CD8-positive, alpha-beta memory T cell (primary cell): ENCODE measurements at regions of chrX and their contacts with region 1.

Region 1: GRCh38 chrX:154748712-154749343 is 2.0 kb downstream of the GAB3 start:
- DNase-seq: peak in 4 of 5 donors; percentile 27 to 66 (median 62)
- H3K4me3 ChIP-seq: peak overlapping the region; percentile 68
- H3K4me3 Mint-ChIP-seq: peak overlapping the region; percentile 82 to 91 (median 86)
- H3K27ac ChIP-seq: peak overlapping the region; percentile 76
- H3K27ac Mint-ChIP-seq: peak overlapping the region; percentile 73 to 95 (median 85)
- H3K4me1 ChIP-seq: peaks cover 15% of the 10 kb centered on the region
- H3K4me1 Mint-ChIP-seq: peaks cover 33 to 58% (median 54%) of the 10 kb centered on the region in 3 donors
- H3K27me3 ChIP-seq: no peaks in the 10 kb centered on the region
- H3K27me3 Mint-ChIP-seq: peaks cover 0 to 5% of the 10 kb centered on the region in 2 donors

Region 2: DNA sequence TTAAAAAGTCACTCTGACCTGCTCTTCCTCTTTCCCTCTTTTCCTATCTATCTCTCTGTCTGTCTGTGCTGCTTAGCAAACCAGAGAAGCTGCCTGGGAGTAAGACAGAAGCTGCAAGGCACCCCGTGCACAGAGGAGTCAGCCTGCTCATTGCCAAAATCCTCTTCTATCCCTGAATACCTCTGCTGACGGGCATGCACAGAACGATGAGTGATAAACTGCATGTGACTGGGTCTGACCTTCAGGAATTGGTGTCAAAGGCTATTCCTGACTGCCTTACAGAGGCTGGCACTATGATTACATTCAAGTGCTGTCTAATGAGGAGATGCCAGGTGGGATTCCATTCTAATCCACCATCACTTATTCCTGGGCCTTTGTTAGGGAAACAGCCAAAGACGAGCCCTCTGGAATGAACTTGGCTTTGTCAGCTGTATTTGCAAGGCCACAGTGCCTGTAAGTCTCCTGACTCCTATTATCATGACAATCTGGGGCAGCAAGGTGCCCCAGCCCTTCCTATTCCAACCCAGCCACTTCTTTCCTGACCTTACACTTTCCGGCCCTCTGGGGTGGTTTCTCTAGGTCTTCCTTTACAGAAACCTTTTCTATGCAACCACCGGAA is 50.1 kb before region 1 on chrX:
- CTCF ChIA-PET with region 1: no interaction called
- POLR2A ChIA-PET with region 1: no interaction called
- DNase-seq: no peak
- H3K4me3 ChIP-seq: no peak overlapping the region
- H3K4me3 Mint-ChIP-seq: peak overlapping the region in 1 of 7 donors; percentile 79
- H3K27ac ChIP-seq: no peak overlapping the region
- H3K27ac Mint-ChIP-seq: peak overlapping the region in 3 of 8 donors; percentile 27 to 64 (median 51)
- H3K4me1 ChIP-seq: no peaks in the 10 kb centered on the region
- H3K4me1 Mint-ChIP-seq: peaks cover 4 to 29% (median 12%) of the 10 kb centered on the region in 3 donors
- H3K27me3 ChIP-seq: no peaks in the 10 kb centered on the region
- H3K27me3 Mint-ChIP-seq: peaks cover 0 to 10% of the 10 kb centered on the region in 2 donors

Region 3: GRCh38 chrX:154717824-154718223 is 31.0 kb before region 1 on chrX:
- CTCF ChIA-PET with region 1: interaction called, 65 read pairs
- POLR2A ChIA-PET with region 1: interaction called, 5 read pairs
- DNase-seq: peak; percentile 9 to 55 (median 35)
- H3K4me3 ChIP-seq: no peak overlapping the region
- H3K4me3 Mint-ChIP-seq: peak overlapping the region; percentile 62 to 82 (median 66)
- H3K27ac ChIP-seq: peak overlapping the region; percentile 70
- H3K27ac Mint-ChIP-seq: peak overlapping the region; percentile 64 to 95 (median 88)
- H3K4me1 ChIP-seq: peaks cover 48% of the 10 kb centered on the region
- H3K4me1 Mint-ChIP-seq: peaks cover 52 to 88% (median 66%) of the 10 kb centered on the region in 3 donors
- H3K27me3 ChIP-seq: no peaks in the 10 kb centered on the region
- H3K27me3 Mint-ChIP-seq: no peaks in the 10 kb centered on the region

Region 4: GRCh38 chrX:154724993-154725756 is 23.7 kb before region 1 on chrX:
- CTCF ChIA-PET with region 1: interaction called, 65 read pairs
- POLR2A ChIA-PET with region 1: interaction called, 11 read pairs
- DNase-seq: no peak
- H3K4me3 ChIP-seq: no peak overlapping the region
- H3K4me3 Mint-ChIP-seq: peak overlapping the region in 6 of 7 donors; percentile 28 to 70 (median 52)
- H3K27ac ChIP-seq: peak overlapping the region; percentile 12
- H3K27ac Mint-ChIP-seq: peak overlapping the region; percentile 79 to 95 (median 88)
- H3K4me1 ChIP-seq: peaks cover 33% of the 10 kb centered on the region
- H3K4me1 Mint-ChIP-seq: peaks cover 62 to 91% (median 82%) of the 10 kb centered on the region in 3 donors
- H3K27me3 ChIP-seq: no peaks in the 10 kb centered on the region
- H3K27me3 Mint-ChIP-seq: peaks cover 0 to 2% of the 10 kb centered on the region in 2 donors

Region 5: DNA sequence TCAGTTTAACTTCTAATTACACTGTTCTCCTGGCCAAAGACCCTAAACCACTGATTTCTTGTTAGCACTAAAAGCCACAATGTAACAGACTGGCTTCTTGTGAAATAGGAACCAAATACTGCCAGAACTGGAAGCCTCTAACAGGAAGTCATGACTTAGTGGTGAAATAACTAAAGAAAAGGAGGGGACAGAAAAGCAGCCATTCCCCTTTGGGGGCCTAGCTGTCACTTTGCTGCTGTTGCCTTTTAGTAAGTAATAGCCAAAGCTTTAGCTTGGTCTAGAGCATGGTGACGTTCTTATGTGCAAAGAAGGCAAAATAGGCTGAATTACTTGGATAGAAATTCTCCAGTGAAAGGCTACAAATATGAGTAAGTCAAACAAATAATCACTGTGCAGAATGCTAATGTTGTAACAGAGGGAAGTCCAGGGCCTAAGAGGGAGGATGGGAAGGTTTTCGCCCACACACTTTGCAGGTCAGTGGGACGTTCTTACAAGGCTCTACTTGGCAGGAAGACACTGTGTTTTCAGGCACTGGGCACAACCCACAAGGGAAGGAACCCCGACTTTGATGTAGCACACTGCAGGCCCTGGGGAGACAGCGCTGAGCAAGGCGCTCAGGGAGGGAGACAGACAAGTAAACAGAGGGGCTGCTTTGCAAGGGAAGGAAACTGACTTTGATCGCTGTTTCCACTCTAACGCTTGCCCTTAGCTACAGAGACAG is 14.6 kb before region 1 on chrX:
- CTCF ChIA-PET with region 1: interaction called, 40 read pairs
- POLR2A ChIA-PET with region 1: interaction called, 8 read pairs
- DNase-seq: peak; percentile 17 to 66 (median 57)
- H3K4me3 ChIP-seq: peak overlapping the region; percentile 43
- H3K4me3 Mint-ChIP-seq: peak overlapping the region; percentile 66 to 84 (median 81)
- H3K27ac ChIP-seq: peak overlapping the region; percentile 61
- H3K27ac Mint-ChIP-seq: peak overlapping the region; percentile 87 to 98 (median 93)
- H3K4me1 ChIP-seq: peaks cover 90% of the 10 kb centered on the region
- H3K4me1 Mint-ChIP-seq: peaks cover 95 to 98% (median 98%) of the 10 kb centered on the region in 3 donors
- H3K27me3 ChIP-seq: no peaks in the 10 kb centered on the region
- H3K27me3 Mint-ChIP-seq: peaks cover 0 to 1% of the 10 kb centered on the region in 2 donors

Region 6: GRCh38 chrX:154762523-154763289 is 13.9 kb after region 1 on chrX and contains the start of gene DKC1:
- CTCF ChIA-PET with region 1: interaction called, 13 read pairs
- POLR2A ChIA-PET with region 1: interaction called, 22 read pairs
- DNase-seq: peak; percentile 90 to 97 (median 93)
- H3K4me3 ChIP-seq: peak within 1 kb of the TSS; percentile 87
- H3K4me3 Mint-ChIP-seq: peak within 1 kb of the TSS; percentile 86 to 93 (median 88)
- H3K27ac ChIP-seq: peak within 1 kb of the TSS; percentile 64
- H3K27ac Mint-ChIP-seq: peak within 1 kb of the TSS; percentile 89 to 99 (median 94)
- H3K4me1 ChIP-seq: peaks cover 11% of the 10 kb centered on the region
- H3K4me1 Mint-ChIP-seq: peaks cover 14 to 32% (median 25%) of the 10 kb centered on the region in 3 donors
- H3K27me3 ChIP-seq: no peaks in the 10 kb centered on the region
- H3K27me3 Mint-ChIP-seq: no peaks in the 10 kb centered on the region
- total RNA-seq, gene DKC1: 214 to 219 TPM

Region 7: GRCh38 chrX:155169881-155170280 is 421.1 kb after region 1 on chrX:
- CTCF ChIA-PET with region 1: no interaction called
- POLR2A ChIA-PET with region 1: no interaction called
- DNase-seq: no peak
- H3K4me3 ChIP-seq: no peak overlapping the region
- H3K4me3 Mint-ChIP-seq: no peak overlapping the region
- H3K27ac ChIP-seq: no peak overlapping the region
- H3K27ac Mint-ChIP-seq: no peak overlapping the region
- H3K4me1 ChIP-seq: no peaks in the 10 kb centered on the region
- H3K4me1 Mint-ChIP-seq: no peaks in the 10 kb centered on the region
- H3K27me3 ChIP-seq: no peaks in the 10 kb centered on the region
- H3K27me3 Mint-ChIP-seq: peaks cover 1 to 3% of the 10 kb centered on the region in 2 donors